HEK293T (cell line): ENCODE measurements at regions of chr10 and their contacts with region 1.

Region 1: DNA sequence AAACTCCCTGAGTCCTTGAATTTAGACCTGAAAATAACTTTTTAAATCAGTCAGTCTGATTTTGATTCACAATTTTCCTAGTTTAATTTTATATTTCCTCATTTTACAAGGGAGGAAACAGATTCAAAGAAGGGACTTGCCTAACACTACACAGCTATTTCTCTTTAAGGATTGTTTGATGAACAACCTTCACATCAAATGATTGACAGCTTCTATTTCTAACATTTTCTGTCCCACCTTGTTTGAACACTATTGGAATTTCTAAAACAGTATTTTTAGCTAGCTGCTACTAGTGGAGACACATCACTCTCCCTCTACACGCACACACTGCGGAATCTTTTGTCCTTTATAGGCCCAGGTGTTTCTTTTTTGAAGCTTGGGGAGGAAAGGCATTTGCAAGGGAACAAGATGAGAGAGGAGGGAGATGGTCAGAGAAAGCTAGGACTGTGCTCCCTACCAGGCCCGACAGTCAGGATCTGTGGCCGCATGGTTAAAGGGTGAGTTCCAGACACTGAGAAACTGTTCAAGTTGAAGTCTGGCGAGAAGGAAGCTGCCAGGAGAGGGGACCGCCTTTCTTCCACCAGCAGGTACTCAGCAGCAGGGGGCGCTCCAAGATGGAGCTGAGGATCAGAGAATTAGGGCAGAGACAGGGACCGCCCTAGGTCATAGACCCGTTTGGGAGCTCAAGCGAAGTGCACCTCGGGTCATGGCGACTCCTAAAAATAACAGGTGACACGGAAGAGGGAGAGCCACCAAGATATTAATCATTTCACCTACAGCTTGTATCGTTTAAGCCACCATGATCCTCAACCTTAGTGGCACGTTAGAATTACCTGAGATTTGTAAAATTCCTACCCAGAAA is 49.7 kb downstream of the DNAJC12 start:
- DNase-seq: peak; percentile 68

Region 2: DNA sequence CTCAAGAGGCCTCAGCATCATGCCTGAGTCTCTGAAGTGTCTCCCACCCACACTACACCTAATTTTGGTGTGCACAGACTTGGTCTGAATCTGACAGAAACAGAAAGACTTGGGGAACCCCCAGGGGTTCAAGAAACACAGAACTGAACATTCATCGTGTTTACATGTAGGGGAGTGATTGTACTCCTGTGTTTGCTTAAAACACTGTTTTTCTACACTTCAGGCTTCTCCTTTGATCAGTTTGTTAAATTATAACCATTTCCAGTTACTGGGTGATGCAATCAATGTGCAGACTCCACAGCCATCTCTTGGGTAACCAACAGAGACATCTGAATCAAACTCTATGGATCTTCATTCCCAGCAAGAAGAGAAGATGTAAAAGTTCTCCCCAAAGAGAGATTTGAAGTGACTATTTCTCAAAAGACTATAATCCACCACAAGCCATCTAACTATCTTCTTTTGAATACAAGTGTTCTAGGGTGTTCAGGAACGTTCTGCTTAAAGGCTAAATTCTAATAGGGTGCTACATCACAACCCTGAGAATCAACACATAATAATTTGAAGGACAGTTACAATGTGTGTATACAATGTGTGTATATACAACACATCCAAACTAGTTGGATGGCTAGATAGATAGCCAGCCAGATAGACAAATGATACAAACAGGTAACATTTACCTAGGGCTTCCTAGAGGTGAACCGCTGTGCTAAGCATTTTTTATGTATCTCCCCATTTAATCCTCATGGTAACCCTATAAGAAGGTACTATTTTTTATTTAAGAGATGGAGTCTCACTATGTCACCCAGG is 15.5 kb after region 1 on chr10:
- CTCF ChIA-PET with region 1: no interaction called
- POLR2A ChIA-PET with region 1: no interaction called
- DNase-seq: no peak

Region 3: DNA sequence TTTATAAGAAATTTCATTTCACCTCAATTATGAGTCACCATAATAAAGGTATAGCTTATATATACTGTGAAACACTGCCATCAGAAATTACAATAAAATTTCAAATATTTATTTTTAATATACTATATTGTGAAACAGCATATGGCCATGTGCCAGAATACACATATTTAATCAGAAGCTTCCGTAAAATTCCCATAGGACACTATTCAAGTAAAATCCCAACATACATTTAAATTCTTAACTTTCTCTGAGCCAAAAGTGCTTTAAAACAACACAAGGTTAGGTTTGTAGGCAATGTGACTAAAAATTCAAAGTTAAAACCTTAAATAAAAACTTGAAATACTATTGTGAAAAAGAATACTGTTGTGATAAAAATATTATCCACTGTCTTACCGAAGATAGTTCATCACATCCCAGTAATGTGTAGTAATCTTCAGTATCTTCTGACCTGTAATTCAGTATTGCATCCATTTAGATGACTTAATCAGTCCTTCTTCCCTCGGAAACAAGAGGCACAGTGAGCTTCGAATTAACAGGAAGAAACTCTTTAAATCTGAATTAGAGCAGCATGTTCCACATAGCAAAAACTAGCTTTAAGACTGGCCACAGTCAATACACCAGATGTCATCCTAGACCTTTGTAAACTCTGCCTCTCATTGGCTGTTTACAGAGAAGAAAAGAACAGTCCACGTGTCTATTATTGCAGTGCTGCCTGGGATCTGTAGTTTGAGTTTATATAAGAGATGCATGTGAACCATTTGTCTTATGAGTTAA is 49.5 kb after region 1 on chr10 and contains the start of gene DNAJC12:
- CTCF ChIA-PET with region 1: no interaction called
- POLR2A ChIA-PET with region 1: interaction called, 11 read pairs
- DNase-seq: peak; percentile 69

Region 4: DNA sequence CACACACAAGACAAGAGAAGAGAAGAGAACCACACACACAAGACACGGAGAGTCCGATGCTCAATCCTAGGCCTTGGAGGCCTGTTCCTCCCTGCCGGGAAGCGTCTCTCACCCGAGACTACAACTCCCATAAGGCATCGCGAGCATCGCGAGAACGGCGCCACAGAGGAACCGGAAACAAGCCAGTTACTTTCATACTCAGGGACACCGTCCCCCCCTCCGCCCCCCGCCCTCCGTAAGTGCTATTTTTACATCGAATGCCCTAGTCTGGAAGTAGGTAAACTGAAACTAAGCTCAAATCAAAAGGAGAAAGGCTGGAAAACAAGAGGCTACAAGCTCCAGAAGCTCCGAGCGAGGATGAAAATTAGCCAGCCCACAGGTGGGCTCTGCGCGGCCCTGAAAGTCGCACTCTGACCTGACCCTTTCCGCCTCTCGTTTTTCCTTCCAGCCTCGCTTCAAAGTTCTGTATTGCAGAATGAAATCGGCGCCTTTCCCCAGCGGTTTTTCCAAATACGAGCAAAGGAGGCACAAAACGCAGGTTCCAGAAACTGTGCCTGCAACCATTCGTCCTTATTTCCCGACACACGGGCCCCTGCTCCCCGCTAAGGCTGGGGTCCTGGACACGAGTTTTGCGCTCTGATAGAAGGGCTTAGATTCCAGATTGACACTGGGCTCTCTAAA is 61.2 kb after region 1 on chr10:
- CTCF ChIA-PET with region 1: interaction called, 11 read pairs
- POLR2A ChIA-PET with region 1: interaction called, 5 read pairs
- DNase-seq: peak; percentile 91

Region 5: DNA sequence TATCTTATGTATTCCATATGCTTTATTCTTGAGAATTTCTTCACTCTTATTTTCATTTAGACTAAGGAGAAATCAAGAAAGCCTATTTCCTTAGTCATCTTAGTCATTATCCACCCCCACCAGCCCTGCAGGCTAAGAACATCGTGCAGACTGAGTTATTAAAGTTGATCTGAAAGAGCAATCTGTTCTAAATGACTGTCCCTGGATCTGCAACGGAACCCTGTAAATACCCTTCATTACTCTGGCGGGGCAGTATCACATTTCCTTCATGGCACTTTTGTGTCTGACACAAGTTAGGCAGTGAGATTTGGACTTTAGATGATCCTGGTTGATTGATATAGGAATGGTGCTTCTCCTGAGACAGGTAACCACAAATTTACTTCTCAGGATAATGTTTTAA is 317.6 kb after region 1 on chr10:
- CTCF ChIA-PET with region 1: no interaction called
- POLR2A ChIA-PET with region 1: no interaction called
- DNase-seq: peak; percentile 33

Region 6: GRCh38 chr10:68153473-68154210 is 365.4 kb after region 1 on chr10:
- CTCF ChIA-PET with region 1: interaction called, 12 read pairs
- POLR2A ChIA-PET with region 1: no interaction called
- DNase-seq: peak; percentile 44